Mammary epithelial cell (primary cell): ENCODE measurements at regions of chr3 and their contacts with region 1.

Region 1: GRCh38 chr3:141441381-141442364 is 45.2 kb upstream of the RASA2 start:
- DNase-seq: peak; percentile 50
- H3K4me3 ChIP-seq: no peak overlapping the region
- H3K27ac ChIP-seq: no peak overlapping the region
- H3K4me1 ChIP-seq: peaks cover 10% of the 10 kb centered on the region
- H3K27me3 ChIP-seq: no peaks in the 10 kb centered on the region
- CTCF ChIP-seq: peak; percentile 74 to 92

Region 2: DNA sequence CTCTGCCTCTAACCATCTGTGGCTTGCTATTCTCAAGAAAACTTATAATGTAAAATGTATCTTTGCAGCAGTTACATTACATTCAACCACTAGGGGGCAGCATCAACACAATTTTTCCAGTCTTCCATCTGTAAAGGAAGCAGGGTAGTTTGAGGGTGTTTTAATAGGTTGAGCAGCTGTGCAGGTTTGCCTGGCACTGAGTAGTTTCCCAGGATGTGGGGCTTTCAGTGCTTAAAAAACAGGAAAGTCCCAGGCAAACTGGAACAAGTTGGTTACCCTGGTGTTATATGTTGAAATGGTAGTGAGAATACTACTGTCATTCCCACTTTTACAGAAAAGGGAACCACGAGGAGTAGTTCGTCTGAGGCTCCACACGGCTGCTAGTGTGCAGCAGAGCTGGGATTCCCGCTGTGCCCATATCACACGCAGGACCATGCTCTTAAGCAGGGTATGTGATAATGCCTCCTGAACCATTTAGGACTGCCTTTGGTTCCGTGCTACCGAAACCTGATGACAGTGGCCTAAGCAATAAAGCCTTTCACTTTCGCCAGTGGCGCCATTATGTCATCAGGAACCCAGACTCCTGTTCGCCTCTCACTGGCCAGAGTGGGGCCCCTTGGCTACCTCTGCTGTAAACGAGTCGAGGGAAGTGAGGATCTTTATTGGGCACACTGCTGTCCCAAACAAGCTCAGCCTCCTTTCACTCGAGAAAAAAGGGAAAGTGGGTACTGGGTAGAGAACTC is 138.0 kb before region 1 on chr3:
- CTCF ChIA-PET with region 1: no interaction called
- dilution Hi-C with region 1: no loop called
- in situ Hi-C with region 1: loop called in 1 of 2 experiments (anchors 10 kb)
- intact Hi-C with region 1: no loop called
- DNase-seq: peak; percentile 72
- H3K4me3 ChIP-seq: no peak overlapping the region
- H3K27ac ChIP-seq: no peak overlapping the region
- H3K4me1 ChIP-seq: peaks cover 12% of the 10 kb centered on the region
- H3K27me3 ChIP-seq: no peaks in the 10 kb centered on the region
- CTCF ChIP-seq: peak; percentile 68 to 75

Region 3: GRCh38 chr3:141311496-141312353 is 129.9 kb before region 1 on chr3:
- CTCF ChIA-PET with region 1: no interaction called
- dilution Hi-C with region 1: no loop called
- in situ Hi-C with region 1: loop called in 1 of 2 experiments (anchors 10 kb)
- intact Hi-C with region 1: loop called (anchors 1 kb)
- DNase-seq: peak; percentile 94
- H3K4me3 ChIP-seq: peak overlapping the region; percentile 75 to 89 (median 78)
- H3K27ac ChIP-seq: peak overlapping the region; percentile 59
- H3K4me1 ChIP-seq: peaks cover 12% of the 10 kb centered on the region
- H3K27me3 ChIP-seq: no peaks in the 10 kb centered on the region
- CTCF ChIP-seq: peak; percentile 65 to 72

Region 4: GRCh38 chr3:141346418-141346817 is 95.3 kb before region 1 on chr3:
- CTCF ChIA-PET with region 1: no interaction called
- dilution Hi-C with region 1: loop called (anchors 5 kb)
- in situ Hi-C with region 1: no loop called
- intact Hi-C with region 1: no loop called
- DNase-seq: no peak
- H3K4me3 ChIP-seq: no peak overlapping the region
- H3K27ac ChIP-seq: no peak overlapping the region
- H3K4me1 ChIP-seq: no peaks in the 10 kb centered on the region
- H3K27me3 ChIP-seq: no peaks in the 10 kb centered on the region
- CTCF ChIP-seq: no peak

Region 5: GRCh38 chr3:141360888-141361598 is 80.6 kb before region 1 on chr3:
- CTCF ChIA-PET with region 1: no interaction called
- dilution Hi-C with region 1: no loop called
- in situ Hi-C with region 1: no loop called
- intact Hi-C with region 1: loop called (anchors 1 kb)
- DNase-seq: peak; percentile 70
- H3K4me3 ChIP-seq: peak overlapping the region in 1 of 3 experiments; percentile 17
- H3K27ac ChIP-seq: no peak overlapping the region
- H3K4me1 ChIP-seq: peaks cover 25% of the 10 kb centered on the region
- H3K27me3 ChIP-seq: no peaks in the 10 kb centered on the region
- CTCF ChIP-seq: peak; percentile 70 to 85

Region 6: GRCh38 chr3:141402476-141403171 is 39.0 kb before region 1 on chr3:
- CTCF ChIA-PET with region 1: no interaction called
- dilution Hi-C with region 1: no loop called
- in situ Hi-C with region 1: no loop called
- intact Hi-C with region 1: loop called (anchors 5 kb)
- DNase-seq: no peak
- H3K4me3 ChIP-seq: peak overlapping the region; percentile 60 to 65 (median 61)
- H3K27ac ChIP-seq: peak overlapping the region; percentile 58
- H3K4me1 ChIP-seq: peaks cover 52% of the 10 kb centered on the region
- H3K27me3 ChIP-seq: no peaks in the 10 kb centered on the region
- CTCF ChIP-seq: no peak